GM10248 (cell line): ENCODE measurements at regions of chr11 and their contacts with region 1.

Region 1: GRCh38 chr11:123110356-123110755 is 48.4 kb upstream of the HSPA8 start:
- DNase-seq: no peak
- CTCF ChIP-seq: no peak

Region 2: DNA sequence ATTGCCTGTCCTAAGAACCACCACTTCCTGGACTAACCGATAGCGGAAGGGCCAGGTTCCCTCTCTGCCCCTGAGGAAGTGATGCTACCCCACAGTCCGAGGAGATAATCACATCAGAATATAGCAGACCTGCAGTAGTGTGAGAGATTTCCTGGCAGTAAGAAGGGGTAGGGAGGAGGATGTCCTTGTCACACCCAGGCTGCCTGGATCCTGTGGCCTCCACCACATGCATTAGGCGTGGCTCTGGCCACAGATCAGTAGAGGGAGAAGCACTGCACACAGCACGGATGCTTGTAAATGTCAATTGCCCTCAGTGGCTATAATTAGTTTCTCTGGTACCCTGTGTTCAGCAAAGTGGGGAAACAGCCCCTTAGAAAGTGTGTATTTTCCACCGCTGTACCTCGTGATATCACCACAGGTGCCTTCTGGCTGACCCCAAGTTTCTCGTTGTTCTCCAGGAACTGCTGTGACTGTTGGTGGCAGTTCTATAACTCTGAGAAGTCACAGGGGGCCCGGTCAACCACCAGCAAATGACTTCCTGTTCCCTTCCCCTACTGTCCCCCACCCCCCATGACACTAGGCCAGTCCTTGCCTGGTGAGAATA is 393.0 kb before region 1 on chr11:
- CTCF ChIA-PET with region 1: no interaction called
- POLR2A ChIA-PET with region 1: no interaction called
- DNase-seq: peak; percentile 59
- CTCF ChIP-seq: no peak

Region 3: DNA sequence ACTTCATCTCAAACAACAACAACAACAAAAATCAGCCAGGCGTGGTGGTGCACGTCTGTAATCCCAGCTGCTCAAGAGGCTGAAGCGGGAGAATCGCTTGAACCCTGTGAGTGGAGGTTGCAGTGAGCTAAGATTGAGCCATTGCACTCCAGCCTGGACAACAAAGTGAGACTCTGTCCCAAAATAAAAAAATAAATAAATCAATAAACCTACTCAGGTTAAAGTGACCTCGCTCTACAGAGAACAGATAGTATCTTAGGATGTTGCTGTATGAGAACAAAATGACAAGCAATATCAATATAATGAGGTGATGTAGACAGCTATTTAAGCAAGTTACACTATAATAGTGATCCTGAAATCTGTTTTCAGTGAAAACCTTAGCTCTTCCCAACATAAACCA is 14.0 kb before region 1 on chr11:
- CTCF ChIA-PET with region 1: interaction called, 17 read pairs
- POLR2A ChIA-PET with region 1: no interaction called
- DNase-seq: no peak
- CTCF ChIP-seq: no peak

Region 4: DNA sequence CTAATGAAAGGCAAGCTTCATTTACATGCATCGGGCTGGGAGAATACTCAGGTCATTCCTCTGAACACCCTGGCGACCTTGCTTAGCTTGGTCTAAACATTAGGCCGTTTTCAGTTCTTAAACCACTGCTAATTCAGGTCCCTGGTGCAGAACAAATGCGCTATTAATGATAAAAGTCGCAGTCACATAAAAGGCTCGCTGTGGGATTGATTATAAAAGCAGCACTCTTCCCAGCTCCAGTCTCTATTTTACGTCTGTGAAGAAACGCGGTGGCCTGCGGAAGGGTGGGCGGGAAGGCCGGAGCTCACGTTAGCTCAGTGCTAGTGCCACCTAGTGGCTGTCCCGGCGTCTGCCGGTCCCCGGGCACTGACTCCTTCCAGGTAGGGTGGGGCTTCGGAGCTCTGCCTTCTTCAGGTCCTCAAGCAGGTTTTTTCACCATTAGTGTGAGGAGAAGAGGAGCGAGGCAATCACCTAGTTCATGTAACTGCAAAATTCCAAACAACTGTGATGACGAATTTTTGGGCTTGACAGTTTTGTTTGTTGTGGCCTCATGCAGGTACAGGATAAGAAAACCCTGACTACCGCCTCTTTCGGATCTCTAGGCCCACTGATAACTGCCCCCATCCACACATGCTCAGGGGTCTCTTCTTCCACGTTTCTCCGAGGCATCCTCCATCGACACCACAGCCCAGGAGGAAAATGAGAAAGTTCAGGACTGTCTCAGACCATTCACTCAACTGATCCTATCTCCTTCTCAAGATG is 151.2 kb after region 1 on chr11:
- CTCF ChIA-PET with region 1: interaction called, 20 read pairs
- POLR2A ChIA-PET with region 1: no interaction called
- DNase-seq: peak; percentile 76
- CTCF ChIP-seq: peak; percentile 89